MCF 10A (cell line): ENCODE measurements at regions of chr6 and their contacts with region 1.

Region 1: DNA sequence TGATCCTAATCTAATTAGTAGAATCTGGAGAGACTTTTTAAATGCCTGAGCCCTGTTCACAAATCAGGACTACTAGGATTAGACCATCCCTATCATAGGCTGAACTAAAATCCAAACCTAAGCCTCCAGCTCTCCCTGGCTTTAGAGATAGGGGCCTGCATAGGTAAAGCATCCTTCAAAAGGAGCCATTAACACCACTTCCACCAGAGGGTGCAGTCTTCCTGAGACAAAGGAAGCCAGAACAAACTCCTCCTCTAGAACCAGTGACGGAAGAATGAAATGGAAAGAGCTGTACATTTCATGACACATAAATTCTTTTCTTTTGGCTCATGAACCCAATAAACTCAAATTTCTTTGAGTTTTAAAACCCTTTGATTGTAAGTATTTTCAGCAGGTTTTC is 291.2 kb upstream of the ADGRB3 start:
- DNase-seq: peak; percentile 70
- H3K4me3 Mint-ChIP-seq: no peak overlapping the region
- H3K27ac Mint-ChIP-seq: no peak overlapping the region
- H3K4me1 Mint-ChIP-seq: no peaks in the 10 kb centered on the region
- H3K27me3 Mint-ChIP-seq: no peaks in the 10 kb centered on the region
- CTCF ChIP-seq: peak; percentile 41

Region 2: DNA sequence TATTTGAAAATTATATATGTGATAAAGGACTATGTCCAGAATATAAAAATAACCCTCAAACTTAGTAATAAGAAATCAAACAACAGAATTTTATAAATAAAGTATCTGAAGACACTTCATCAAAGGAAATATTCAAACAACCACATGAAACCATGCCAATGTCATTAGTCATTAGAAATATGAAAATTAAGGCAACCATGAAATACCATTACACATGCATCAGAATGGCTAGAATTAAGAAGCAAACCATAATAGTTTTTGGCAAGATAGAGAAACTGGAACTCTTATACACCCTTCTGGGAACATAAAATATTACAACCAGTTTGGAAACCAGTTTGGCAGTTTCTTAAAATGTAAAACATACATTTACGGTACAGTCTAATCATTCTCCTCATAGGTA is 154.0 kb after region 1 on chr6:
- CTCF ChIA-PET with region 1: interaction called, 3 read pairs
- POLR2A ChIA-PET with region 1: no interaction called
- intact Hi-C with region 1: loop called (anchors 10 kb)
- DNase-seq: peak; percentile 4
- H3K4me3 Mint-ChIP-seq: no peak overlapping the region
- H3K27ac Mint-ChIP-seq: no peak overlapping the region
- H3K4me1 Mint-ChIP-seq: no peaks in the 10 kb centered on the region
- H3K27me3 Mint-ChIP-seq: no peaks in the 10 kb centered on the region
- CTCF ChIP-seq: peak; percentile 13

Region 3: GRCh38 chr6:68516779-68517178 is 172.9 kb after region 1 on chr6:
- CTCF ChIA-PET with region 1: no interaction called
- POLR2A ChIA-PET with region 1: no interaction called
- intact Hi-C with region 1: no loop called
- DNase-seq: no peak
- H3K4me3 Mint-ChIP-seq: no peak overlapping the region
- H3K27ac Mint-ChIP-seq: no peak overlapping the region
- H3K4me1 Mint-ChIP-seq: no peaks in the 10 kb centered on the region
- H3K27me3 Mint-ChIP-seq: no peaks in the 10 kb centered on the region
- CTCF ChIP-seq: no peak